Ascending aorta (tissue), 2 donors: ENCODE measurements at regions of chr9 and their contacts with region 1.

Region 1: DNA sequence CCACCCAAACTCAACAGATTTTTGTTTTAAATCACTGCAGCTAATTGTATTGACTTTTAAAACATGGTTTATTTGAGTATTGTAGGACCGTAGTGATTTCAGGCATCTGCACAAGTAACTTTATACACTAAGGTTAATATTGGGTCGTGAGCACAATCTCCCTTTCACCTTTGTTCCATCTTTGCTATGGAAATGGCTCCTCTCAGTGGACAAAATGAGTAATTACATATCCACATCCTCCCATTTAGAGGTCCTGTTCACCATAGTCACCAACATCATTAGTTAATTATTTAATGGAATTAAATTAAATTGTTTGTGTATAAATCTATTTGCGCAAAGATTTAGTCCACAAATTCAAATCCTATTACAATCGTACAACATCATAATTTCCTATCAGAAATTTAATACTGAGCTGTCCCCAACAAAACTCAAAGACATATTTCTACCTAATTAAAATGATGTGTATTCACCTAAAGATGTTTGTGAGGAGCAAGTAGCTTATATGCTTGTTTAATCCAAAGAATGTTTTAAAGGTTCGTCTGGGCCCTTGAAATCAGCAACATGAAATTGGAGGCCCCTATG is 173.0 kb upstream of the DAPK1 start:
- DNase-seq: no peak
- H3K4me3 ChIP-seq: no peak overlapping the region
- H3K27ac ChIP-seq: no peak overlapping the region
- H3K4me1 ChIP-seq: no peaks in the 10 kb centered on the region
- H3K27me3 ChIP-seq: no peaks in the 10 kb centered on the region
- CTCF ChIP-seq: peak; percentile 74 to 79 (median 76)

Region 2: GRCh38 chr9:86413966-86414880 is 910.5 kb before region 1 on chr9:
- intact Hi-C with region 1: loop called (anchors 5 kb)
- DNase-seq: no peak
- H3K4me3 ChIP-seq: no peak overlapping the region
- H3K27ac ChIP-seq: no peak overlapping the region
- H3K4me1 ChIP-seq: no peaks in the 10 kb centered on the region
- H3K27me3 ChIP-seq: no peaks in the 10 kb centered on the region
- CTCF ChIP-seq: peak; percentile 38 to 67 (median 59)

Region 3: GRCh38 chr9:86434039-86434726 is 890.5 kb before region 1 on chr9:
- intact Hi-C with region 1: loop called (anchors 5 kb)
- DNase-seq: no peak
- H3K4me3 ChIP-seq: no peak overlapping the region
- H3K27ac ChIP-seq: no peak overlapping the region
- H3K4me1 ChIP-seq: no peaks in the 10 kb centered on the region
- H3K27me3 ChIP-seq: no peaks in the 10 kb centered on the region
- CTCF ChIP-seq: peak; percentile 39 to 70 (median 61)

Region 4: DNA sequence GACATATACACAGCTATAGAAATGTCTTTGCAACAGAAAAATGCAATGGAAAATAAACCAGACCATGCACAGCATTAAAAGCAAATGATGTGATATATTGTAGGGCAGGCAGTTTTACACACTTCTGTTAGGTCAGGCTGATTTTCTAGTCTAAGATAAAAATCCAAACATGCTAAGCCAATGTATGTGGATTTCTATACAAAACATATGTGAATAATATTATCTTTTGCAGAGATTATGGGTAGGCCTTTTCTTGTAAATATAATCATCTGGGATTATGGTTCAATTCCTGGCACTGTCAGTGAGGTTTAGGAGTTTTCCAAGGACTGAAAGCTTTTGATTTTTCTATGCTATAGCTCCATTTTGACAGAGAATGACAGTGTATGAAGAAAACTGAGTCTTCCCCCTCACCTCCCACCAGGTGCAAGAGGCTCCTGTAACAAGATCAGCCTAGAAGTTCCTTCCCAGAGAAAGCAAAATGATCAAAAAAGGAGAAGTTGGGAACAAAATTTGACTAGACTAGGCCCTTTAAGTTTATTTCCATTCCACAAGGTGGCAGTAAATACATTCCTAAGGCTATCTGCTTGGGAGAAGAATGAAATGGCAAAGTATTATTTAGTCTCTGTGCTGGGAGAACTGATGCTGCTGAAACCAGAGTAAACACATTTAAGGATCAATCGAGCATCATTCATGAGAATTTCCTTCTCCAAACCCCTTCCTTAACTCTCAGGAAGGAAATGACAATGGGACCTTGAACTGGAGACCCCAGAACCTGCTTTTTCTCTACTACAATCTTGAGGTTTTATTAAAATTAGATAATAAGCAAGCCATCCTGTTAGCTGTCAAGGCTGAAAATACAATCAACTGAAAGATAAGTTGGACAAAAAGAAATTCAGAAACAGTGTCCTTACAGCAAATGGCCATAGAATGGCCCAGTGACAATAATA is 837.5 kb before region 1 on chr9:
- intact Hi-C with region 1: loop called (anchors 1 kb)
- DNase-seq: no peak
- H3K4me3 ChIP-seq: no peak overlapping the region
- H3K27ac ChIP-seq: no peak overlapping the region
- H3K4me1 ChIP-seq: no peaks in the 10 kb centered on the region
- H3K27me3 ChIP-seq: no peaks in the 10 kb centered on the region
- CTCF ChIP-seq: peak; percentile 48 to 72 (median 51)

Region 5: GRCh38 chr9:86637515-86637914 is 687.2 kb before region 1 on chr9:
- intact Hi-C with region 1: loop called (anchors 10 kb)
- DNase-seq: no peak
- H3K4me3 ChIP-seq: no peak overlapping the region
- H3K27ac ChIP-seq: no peak overlapping the region
- H3K4me1 ChIP-seq: no peaks in the 10 kb centered on the region
- H3K27me3 ChIP-seq: no peaks in the 10 kb centered on the region
- CTCF ChIP-seq: peak in 2 of 3 experiments; percentile 31 to 51

Region 6: GRCh38 chr9:86721843-86722711 is 602.6 kb before region 1 on chr9:
- intact Hi-C with region 1: loop called (anchors 10 kb)
- DNase-seq: peak in 1 of 2 donors; percentile 88
- H3K4me3 ChIP-seq: no peak overlapping the region
- H3K27ac ChIP-seq: peak overlapping the region; percentile 85 to 89
- H3K4me1 ChIP-seq: peaks cover 7 to 24% of the 10 kb centered on the region in 2 donors
- H3K27me3 ChIP-seq: no peaks in the 10 kb centered on the region
- CTCF ChIP-seq: no peak

Region 7: GRCh38 chr9:87148331-87149104 is 176.2 kb before region 1 on chr9:
- intact Hi-C with region 1: loop called (anchors 5 kb)
- DNase-seq: peak; percentile 49 to 95
- H3K4me3 ChIP-seq: peak overlapping the region; percentile 39 to 57
- H3K27ac ChIP-seq: peak overlapping the region; percentile 95 to 98
- H3K4me1 ChIP-seq: peaks cover 0 to 16% of the 10 kb centered on the region in 2 donors
- H3K27me3 ChIP-seq: no peaks in the 10 kb centered on the region
- CTCF ChIP-seq: peak in 1 of 3 experiments; percentile 40